Psoas muscle (tissue), 8 donors: ENCODE measurements at regions of chr6 and their contacts with region 1.

Region 1: GRCh38 chr6:89145787-89146646 is at the start of gene PM20D2:
- DNase-seq: peak; percentile 74 to 84
- ATAC-seq: peak; percentile 83 to 88 (median 86)
- H3K4me3 ChIP-seq: peak within 1 kb of the TSS; percentile 95
- H3K27ac ChIP-seq: peak within 1 kb of the TSS; percentile 100
- H3K4me1 ChIP-seq: peaks cover 6% of the 10 kb centered on the region
- H3K27me3 ChIP-seq: no peaks in the 10 kb centered on the region
- CTCF ChIP-seq: no peak
- total RNA-seq, gene PM20D2: 13.1 to 56.2 (median 25.0) TPM

Region 2: GRCh38 chr6:89035252-89036106 is 110.5 kb before region 1 on chr6:
- intact Hi-C with region 1: loop called in 1 of 2 experiments (anchors 10 kb)
- DNase-seq: peak; percentile 92 to 96
- ATAC-seq: peak; percentile 80 to 87 (median 84)
- H3K4me3 ChIP-seq: peak overlapping the region; percentile 40
- H3K27ac ChIP-seq: peak overlapping the region; percentile 93
- H3K4me1 ChIP-seq: peaks cover 43% of the 10 kb centered on the region
- H3K27me3 ChIP-seq: no peaks in the 10 kb centered on the region
- CTCF ChIP-seq: no peak